MCF 10A (cell line): ENCODE measurements at regions of chr3 and their contacts with region 1.

Region 1: GRCh38 chr3:64717872-64718613 is 30.2 kb upstream of the ADAMTS9 start:
- DNase-seq: peak; percentile 5
- H3K4me3 Mint-ChIP-seq: no peak overlapping the region
- H3K27ac Mint-ChIP-seq: no peak overlapping the region
- H3K4me1 Mint-ChIP-seq: no peaks in the 10 kb centered on the region
- H3K27me3 Mint-ChIP-seq: no peaks in the 10 kb centered on the region
- CTCF ChIP-seq: peak; percentile 69

Region 2: GRCh38 chr3:64392001-64392400 is 326.0 kb before region 1 on chr3:
- CTCF ChIA-PET with region 1: no interaction called
- POLR2A ChIA-PET with region 1: no interaction called
- intact Hi-C with region 1: no loop called
- DNase-seq: no peak
- H3K4me3 Mint-ChIP-seq: no peak overlapping the region
- H3K27ac Mint-ChIP-seq: no peak overlapping the region
- H3K4me1 Mint-ChIP-seq: no peaks in the 10 kb centered on the region
- H3K27me3 Mint-ChIP-seq: no peaks in the 10 kb centered on the region
- CTCF ChIP-seq: no peak

Region 3: DNA sequence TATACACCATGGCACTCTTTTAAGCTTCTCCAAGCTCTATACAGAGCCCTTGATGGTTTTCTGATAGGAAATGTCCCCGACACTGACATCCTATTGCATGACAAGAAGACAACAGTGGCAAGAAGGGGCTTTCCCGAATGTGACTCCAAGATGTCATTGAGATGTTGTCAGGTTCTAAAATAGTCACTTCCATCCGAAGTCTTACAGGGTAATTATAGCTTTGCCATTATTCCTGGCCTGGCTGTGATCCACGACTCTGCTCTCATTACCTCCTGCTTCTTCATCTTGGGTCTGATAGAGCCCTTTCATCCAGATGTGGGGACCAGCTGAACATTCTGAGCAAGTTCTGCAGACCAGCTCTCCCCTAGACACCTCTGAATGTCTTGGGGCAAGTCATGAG is 10.4 kb after region 1 on chr3:
- CTCF ChIA-PET with region 1: interaction called, 10 read pairs
- POLR2A ChIA-PET with region 1: no interaction called
- intact Hi-C with region 1: no loop called
- DNase-seq: no peak
- H3K4me3 Mint-ChIP-seq: no peak overlapping the region
- H3K27ac Mint-ChIP-seq: no peak overlapping the region
- H3K4me1 Mint-ChIP-seq: no peaks in the 10 kb centered on the region
- H3K27me3 Mint-ChIP-seq: no peaks in the 10 kb centered on the region
- CTCF ChIP-seq: no peak

Region 4: GRCh38 chr3:65170390-65171042 is 452.5 kb after region 1 on chr3:
- CTCF ChIA-PET with region 1: interaction called, 3 read pairs
- POLR2A ChIA-PET with region 1: no interaction called
- intact Hi-C with region 1: loop called (anchors 1 kb)
- DNase-seq: peak; percentile 89
- H3K4me3 Mint-ChIP-seq: no peak overlapping the region
- H3K27ac Mint-ChIP-seq: peak overlapping the region; percentile 28
- H3K4me1 Mint-ChIP-seq: peaks cover 18% of the 10 kb centered on the region
- H3K27me3 Mint-ChIP-seq: no peaks in the 10 kb centered on the region
- CTCF ChIP-seq: peak; percentile 40